GM10248 (cell line): ENCODE measurements at regions of chr2 and their contacts with region 1.

Region 1: GRCh38 chr2:179985163-179985820 is 21.8 kb downstream of the CWC22 start:
- DNase-seq: no peak
- CTCF ChIP-seq: no peak

Region 2: GRCh38 chr2:179837408-179837807 is 147.9 kb before region 1 on chr2:
- CTCF ChIA-PET with region 1: no interaction called
- POLR2A ChIA-PET with region 1: no interaction called
- DNase-seq: no peak
- CTCF ChIP-seq: no peak

Region 3: DNA sequence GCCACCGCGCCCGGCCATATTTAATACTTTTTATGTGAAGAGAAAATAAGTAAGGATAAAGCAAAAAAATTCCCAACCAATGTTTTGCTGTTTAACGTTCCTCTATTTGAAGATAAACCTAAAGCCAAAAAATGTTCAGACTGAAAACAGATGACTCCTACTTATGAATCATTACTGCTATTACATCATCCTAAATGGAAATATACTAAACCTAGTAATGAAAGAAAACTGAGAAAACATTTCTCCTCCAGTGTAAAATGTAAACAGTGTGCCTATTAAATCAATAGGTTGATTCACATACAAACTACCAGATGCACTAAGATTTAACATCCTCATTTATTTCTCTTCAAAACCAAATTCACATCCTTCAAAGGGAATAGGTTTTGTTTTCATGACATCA is 21.7 kb before region 1 on chr2:
- CTCF ChIA-PET with region 1: no interaction called
- POLR2A ChIA-PET with region 1: no interaction called
- DNase-seq: no peak
- CTCF ChIP-seq: no peak

Region 4: GRCh38 chr2:180000434-180000833 is 15.1 kb after region 1 on chr2:
- CTCF ChIA-PET with region 1: interaction called, 14 read pairs
- POLR2A ChIA-PET with region 1: no interaction called
- DNase-seq: no peak
- CTCF ChIP-seq: no peak